PC-3 (cell line): ENCODE measurements at regions of chr11 and their contacts with region 1.

Region 1: GRCh38 chr11:3091791-3092602 is 34.8 kb upstream of the CARS1 start:
- DNase-seq: peak; percentile 88
- ATAC-seq: peak; percentile 67
- H3K4me3 ChIP-seq: no peak overlapping the region
- H3K27ac ChIP-seq: no peak overlapping the region
- H3K4me1 ChIP-seq: peaks cover 31% of the 10 kb centered on the region
- H3K27me3 ChIP-seq: no peaks in the 10 kb centered on the region
- CTCF ChIP-seq: peak; percentile 96

Region 2: DNA sequence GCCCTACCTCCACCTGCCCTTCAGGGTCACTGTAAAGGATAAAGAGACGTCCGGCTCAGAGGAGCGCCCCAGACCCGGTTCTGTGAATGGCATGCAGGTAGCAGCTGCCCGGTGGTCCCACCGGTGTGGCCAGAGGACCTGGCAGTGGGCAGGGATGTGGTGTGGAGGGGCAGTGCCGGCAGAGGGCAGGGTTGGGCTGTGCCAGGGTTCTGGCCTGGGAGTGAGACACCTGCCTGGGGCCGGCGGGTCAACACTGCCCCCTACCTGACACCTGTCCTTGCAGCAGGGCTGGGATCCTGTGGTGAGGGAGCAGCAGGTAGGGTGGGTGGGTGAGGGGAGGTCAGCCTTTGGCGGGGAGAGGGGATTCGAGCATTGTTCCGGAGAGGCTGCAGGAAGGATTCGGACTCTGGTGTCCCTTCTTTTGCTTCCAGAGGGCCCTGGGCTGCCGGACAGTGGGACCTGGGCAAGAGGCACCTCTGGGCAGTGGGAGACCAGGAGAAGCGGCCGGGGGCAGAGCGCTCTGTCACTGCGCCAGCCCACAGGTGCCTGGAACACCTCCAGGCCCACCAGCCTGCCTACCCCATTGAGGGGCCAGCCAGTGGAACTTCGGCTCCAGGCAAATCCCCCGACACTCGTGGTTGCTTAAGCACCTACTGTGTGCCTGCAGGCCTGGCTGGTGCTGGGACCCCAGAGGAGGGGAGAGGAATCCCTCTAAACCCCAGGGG is 161.1 kb before region 1 on chr11:
- CTCF ChIA-PET with region 1: interaction called, 4 read pairs
- POLR2A ChIA-PET with region 1: interaction called, 3 read pairs
- intact Hi-C with region 1: loop called (anchors 5 kb)
- DNase-seq: peak; percentile 84
- ATAC-seq: peak; percentile 45
- H3K4me3 ChIP-seq: peak overlapping the region; percentile 78
- H3K27ac ChIP-seq: peak overlapping the region; percentile 99
- H3K4me1 ChIP-seq: peaks cover 43% of the 10 kb centered on the region
- H3K27me3 ChIP-seq: no peaks in the 10 kb centered on the region
- CTCF ChIP-seq: peak; percentile 87

Region 3: GRCh38 chr11:3037040-3037944 is 54.7 kb before region 1 on chr11:
- CTCF ChIA-PET with region 1: interaction called, 27 read pairs
- POLR2A ChIA-PET with region 1: interaction called, 17 read pairs
- intact Hi-C with region 1: loop called (anchors 1 kb)
- DNase-seq: peak; percentile 77
- ATAC-seq: peak; percentile 98
- H3K4me3 ChIP-seq: 0 out of 2 replicates have a peak overlapping the region, but pooled peaks have one; percentile 36
- H3K27ac ChIP-seq: peak overlapping the region; percentile 92
- H3K4me1 ChIP-seq: peaks cover 16% of the 10 kb centered on the region
- H3K27me3 ChIP-seq: no peaks in the 10 kb centered on the region
- CTCF ChIP-seq: peak; percentile 91

Region 4: DNA sequence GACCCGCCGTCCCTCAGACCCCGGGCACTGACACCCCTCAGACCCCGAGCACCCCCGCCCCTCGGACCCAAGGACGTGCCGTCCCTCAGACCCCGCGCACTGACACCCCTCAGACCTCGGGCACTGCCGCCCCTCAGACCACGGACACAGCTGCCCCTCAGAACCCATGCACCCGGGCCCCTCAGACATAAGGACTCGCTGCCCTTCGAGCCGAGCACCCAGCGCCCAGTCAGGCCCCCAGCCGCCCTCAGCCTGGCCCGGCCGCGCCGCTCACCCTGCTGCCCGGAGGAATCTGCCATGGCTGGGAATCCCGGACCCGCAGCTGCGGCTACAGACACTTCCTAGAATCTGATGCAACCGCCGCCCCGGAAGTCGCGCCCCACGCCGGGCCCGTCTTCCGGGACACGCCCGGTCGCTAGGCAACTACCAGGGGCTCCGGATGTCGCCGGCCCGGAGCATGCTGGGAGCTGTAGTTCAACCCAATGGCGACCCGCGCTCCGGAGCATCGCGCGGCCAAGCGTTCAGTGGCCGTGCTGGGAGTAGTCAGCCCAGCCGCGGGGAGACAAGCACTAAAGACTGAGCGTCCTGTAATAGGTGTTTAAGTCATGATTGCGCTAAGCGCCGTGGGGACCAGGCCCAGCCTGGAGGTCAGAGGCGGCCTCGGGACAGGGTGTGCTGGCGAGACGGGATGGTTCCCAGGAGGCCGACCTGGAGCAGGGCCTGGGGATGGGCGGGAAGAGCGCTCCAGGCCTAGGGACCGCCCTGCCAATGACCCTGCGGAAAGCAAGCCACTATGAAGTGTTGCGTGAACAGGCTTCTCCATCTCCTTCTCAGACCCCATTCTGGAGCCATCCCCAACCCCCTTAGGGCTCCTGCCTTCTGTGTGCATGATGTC is 34.7 kb before region 1 on chr11 and contains the start of gene CARS1:
- CTCF ChIA-PET with region 1: interaction called, 9 read pairs
- POLR2A ChIA-PET with region 1: no interaction called
- intact Hi-C with region 1: loop called (anchors 5 kb)
- DNase-seq: peak; percentile 92
- ATAC-seq: peak; percentile 95
- H3K4me3 ChIP-seq: peak within 1 kb of the TSS; percentile 98
- H3K27ac ChIP-seq: peak within 1 kb of the TSS; percentile 54
- H3K4me1 ChIP-seq: peaks cover 22% of the 10 kb centered on the region
- H3K27me3 ChIP-seq: no peaks in the 10 kb centered on the region
- CTCF ChIP-seq: no peak
- total RNA-seq, gene CARS1: 39.7 and 43.7 TPM in 2 replicates

Region 5: DNA sequence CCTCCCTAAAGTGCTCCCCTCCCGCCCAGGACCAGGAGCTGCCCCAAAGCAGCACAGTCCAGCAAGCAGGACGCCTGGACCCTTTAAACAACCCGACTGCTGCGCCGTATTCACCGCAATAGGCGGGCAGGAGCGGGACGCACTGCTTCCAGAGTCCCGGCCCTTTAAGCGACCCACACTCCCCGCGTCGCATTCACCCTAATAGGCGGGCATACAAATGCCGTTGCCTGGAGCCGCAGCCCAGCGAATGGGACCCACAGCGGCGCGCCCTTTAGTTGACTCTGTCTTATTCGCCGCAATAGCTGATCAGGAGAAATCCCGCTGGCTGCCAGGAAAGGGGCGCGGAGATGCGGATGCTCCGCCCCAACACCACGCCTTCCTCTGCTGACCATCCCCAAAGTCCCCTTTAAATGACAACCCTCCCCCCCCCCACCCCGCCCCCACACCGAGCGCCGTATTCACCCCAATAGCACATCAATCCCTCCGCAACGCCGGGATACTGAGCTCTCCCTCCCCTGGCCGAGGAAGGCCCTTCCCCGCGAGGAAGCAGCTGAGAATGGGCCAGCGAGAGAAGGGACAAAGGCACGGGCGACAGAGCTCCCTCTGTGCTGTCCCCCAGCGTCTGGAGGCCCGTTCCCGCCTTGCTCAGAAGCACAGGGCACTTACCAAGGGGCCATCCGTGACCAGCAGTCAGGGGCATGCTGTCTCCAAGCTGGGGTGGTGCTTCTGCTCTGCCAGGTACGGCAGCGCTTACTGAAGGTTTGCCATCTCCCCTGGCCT is 68.4 kb after region 1 on chr11:
- CTCF ChIA-PET with region 1: no interaction called
- POLR2A ChIA-PET with region 1: no interaction called
- intact Hi-C with region 1: loop called (anchors 2 kb)
- DNase-seq: no peak
- ATAC-seq: no peak
- H3K4me3 ChIP-seq: no peak overlapping the region
- H3K27ac ChIP-seq: no peak overlapping the region
- H3K4me1 ChIP-seq: peaks cover 3% of the 10 kb centered on the region; the same call in 1 of the 2 replicates
- H3K27me3 ChIP-seq: no peaks in the 10 kb centered on the region
- CTCF ChIP-seq: no peak